Ascending aorta (tissue), 2 donors: ENCODE measurements at regions of chr22 and their contacts with region 1.

Region 1: GRCh38 chr22:41360126-41360525 is 21.6 kb upstream of the TEF start:
- DNase-seq: no peak
- H3K4me3 ChIP-seq: no peak overlapping the region
- H3K27ac ChIP-seq: no peak overlapping the region
- H3K4me1 ChIP-seq: no peaks in the 10 kb centered on the region
- H3K27me3 ChIP-seq: no peaks in the 10 kb centered on the region
- CTCF ChIP-seq: no peak

Region 2: GRCh38 chr22:41301105-41302020 is 58.8 kb before region 1 on chr22 and contains the start of gene ZC3H7B:
- intact Hi-C with region 1: no loop called
- DNase-seq: peak; percentile 24 to 90
- H3K4me3 ChIP-seq: peak within 1 kb of the TSS; percentile 78 to 86
- H3K27ac ChIP-seq: peak within 1 kb of the TSS; percentile 81 to 86
- H3K4me1 ChIP-seq: peaks cover 0 to 7% of the 10 kb centered on the region in 2 donors
- H3K27me3 ChIP-seq: no peaks in the 10 kb centered on the region
- CTCF ChIP-seq: peak; percentile 22 to 73 (median 61)
- total RNA-seq, gene ZC3H7B: 54.9 TPM

Region 3: GRCh38 chr22:41429232-41429950 is 69.3 kb after region 1 on chr22:
- intact Hi-C with region 1: loop called (anchors 2 kb)
- DNase-seq: no peak
- H3K4me3 ChIP-seq: no peak overlapping the region
- H3K27ac ChIP-seq: peak overlapping the region in 1 of 2 donors; percentile 2
- H3K4me1 ChIP-seq: peaks cover 0 to 5% of the 10 kb centered on the region in 2 donors
- H3K27me3 ChIP-seq: no peaks in the 10 kb centered on the region
- CTCF ChIP-seq: no peak